Endothelial cell of umbilical vein (primary cell): ENCODE measurements at regions of chr18 and their contacts with region 1.

Region 1: GRCh38 chr18:74291771-74292540 is at the start of gene CYB5A:
- DNase-seq: peak; percentile 97
- H3K4me3 ChIP-seq: peak within 1 kb of the TSS; percentile 61 to 79 (median 62)
- H3K27ac ChIP-seq: no peak within 1 kb of the TSS
- H3K4me1 ChIP-seq: peaks cover 6% of the 10 kb centered on the region
- H3K27me3 ChIP-seq: no peaks in the 10 kb centered on the region
- CTCF ChIP-seq: peak in 1 of 2 donors; percentile 8
- POLR2A ChIP-seq: no peak
- total RNA-seq, gene CYB5A: 24.9 and 32.2 TPM in 2 replicates

Region 2: GRCh38 chr18:74147779-74148542 is 144.0 kb before region 1 on chr18 and contains the starts of genes FBXO15 and TIMM21:
- CTCF ChIA-PET with region 1: no interaction called
- POLR2A ChIA-PET with region 1: no interaction called
- dilution Hi-C with region 1: no loop called
- intact Hi-C with region 1: loop called (anchors 1 kb)
- DNase-seq: peak; percentile 99
- H3K4me3 ChIP-seq: peak within 1 kb of the TSS; percentile 79 to 95 (median 85)
- H3K27ac ChIP-seq: peak within 1 kb of the TSS; percentile 47
- H3K4me1 ChIP-seq: peaks cover 17% of the 10 kb centered on the region
- H3K27me3 ChIP-seq: no peaks in the 10 kb centered on the region
- CTCF ChIP-seq: no peak
- POLR2A ChIP-seq: peak; percentile 81
- total RNA-seq, gene FBXO15: not detected in 2 replicates
- total RNA-seq, gene TIMM21: 36.7 and 38.9 TPM in 2 replicates

Region 3: GRCh38 chr18:74196220-74197119 is 95.5 kb before region 1 on chr18:
- CTCF ChIA-PET with region 1: no interaction called
- POLR2A ChIA-PET with region 1: no interaction called
- dilution Hi-C with region 1: no loop called
- intact Hi-C with region 1: loop called (anchors 5 kb)
- DNase-seq: peak; percentile 78
- H3K4me3 ChIP-seq: peak overlapping the region in 2 of 3 experiments; percentile 14 to 48
- H3K27ac ChIP-seq: no peak overlapping the region
- H3K4me1 ChIP-seq: no peaks in the 10 kb centered on the region
- H3K27me3 ChIP-seq: peaks cover 0 to 3% of the 10 kb centered on the region in 2 experiments
- CTCF ChIP-seq: peak; percentile 62 to 86
- POLR2A ChIP-seq: no peak

Region 4: GRCh38 chr18:74255131-74255616 is 36.8 kb before region 1 on chr18:
- CTCF ChIA-PET with region 1: interaction called, 3 read pairs
- POLR2A ChIA-PET with region 1: no interaction called
- dilution Hi-C with region 1: no loop called
- intact Hi-C with region 1: loop called (anchors 2 kb)
- DNase-seq: peak; percentile 67
- H3K4me3 ChIP-seq: no peak overlapping the region
- H3K27ac ChIP-seq: no peak overlapping the region
- H3K4me1 ChIP-seq: peaks cover 17% of the 10 kb centered on the region
- H3K27me3 ChIP-seq: no peaks in the 10 kb centered on the region
- CTCF ChIP-seq: no peak
- POLR2A ChIP-seq: no peak

Region 5: DNA sequence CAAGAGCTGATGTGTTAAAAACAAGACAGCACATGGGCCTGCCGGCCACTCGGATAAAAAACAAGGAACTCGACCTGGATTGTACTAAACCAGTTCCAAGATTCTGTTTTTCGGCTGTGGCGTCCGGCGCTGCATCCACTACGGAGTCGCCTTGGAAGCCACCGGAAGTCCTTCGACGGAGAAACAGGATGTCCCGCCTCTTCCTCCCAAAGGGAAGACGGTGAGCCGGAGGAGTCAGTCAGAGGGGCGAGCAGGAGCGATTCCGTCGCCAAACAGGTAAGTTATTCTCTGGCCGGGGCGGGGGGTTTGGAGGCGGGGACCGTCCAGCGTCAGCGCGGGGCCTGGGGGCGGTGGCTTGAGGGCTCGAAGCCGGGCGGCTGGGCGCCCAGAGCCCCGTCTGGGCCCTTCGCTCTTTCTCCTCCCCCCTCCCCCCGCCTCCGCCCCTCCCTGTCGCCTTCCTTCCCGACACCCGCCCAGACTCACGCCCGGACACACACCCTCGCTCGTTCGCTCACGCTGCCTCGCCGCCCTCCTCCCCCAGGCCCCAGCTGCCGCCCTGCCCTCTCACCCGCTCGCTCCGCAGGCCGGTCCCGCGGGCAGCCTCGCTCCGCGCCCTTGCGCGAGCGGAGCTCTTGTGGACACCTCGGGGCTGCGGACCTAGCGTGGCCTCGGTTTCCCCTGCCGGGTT is 305.9 kb after region 1 on chr18 and contains the start of gene ZNF407:
- CTCF ChIA-PET with region 1: no interaction called
- POLR2A ChIA-PET with region 1: no interaction called
- dilution Hi-C with region 1: no loop called
- intact Hi-C with region 1: loop called (anchors 1 kb)
- DNase-seq: peak; percentile 91
- H3K4me3 ChIP-seq: peak within 1 kb of the TSS; percentile 88 to 98 (median 97)
- H3K27ac ChIP-seq: peak within 1 kb of the TSS; percentile 99
- H3K4me1 ChIP-seq: peaks cover 15% of the 10 kb centered on the region
- H3K27me3 ChIP-seq: no peaks in the 10 kb centered on the region
- CTCF ChIP-seq: no peak
- POLR2A ChIP-seq: peak; percentile 6
- total RNA-seq, gene ZNF407: 17.3 and 20.1 TPM in 2 replicates